Activated CD4-positive, alpha-beta T cell treated with anti-CD3 and anti-CD28 coated beads for 36 hours (primary cell): ENCODE measurements at regions of chr9 and their contacts with region 1.

Region 1: DNA sequence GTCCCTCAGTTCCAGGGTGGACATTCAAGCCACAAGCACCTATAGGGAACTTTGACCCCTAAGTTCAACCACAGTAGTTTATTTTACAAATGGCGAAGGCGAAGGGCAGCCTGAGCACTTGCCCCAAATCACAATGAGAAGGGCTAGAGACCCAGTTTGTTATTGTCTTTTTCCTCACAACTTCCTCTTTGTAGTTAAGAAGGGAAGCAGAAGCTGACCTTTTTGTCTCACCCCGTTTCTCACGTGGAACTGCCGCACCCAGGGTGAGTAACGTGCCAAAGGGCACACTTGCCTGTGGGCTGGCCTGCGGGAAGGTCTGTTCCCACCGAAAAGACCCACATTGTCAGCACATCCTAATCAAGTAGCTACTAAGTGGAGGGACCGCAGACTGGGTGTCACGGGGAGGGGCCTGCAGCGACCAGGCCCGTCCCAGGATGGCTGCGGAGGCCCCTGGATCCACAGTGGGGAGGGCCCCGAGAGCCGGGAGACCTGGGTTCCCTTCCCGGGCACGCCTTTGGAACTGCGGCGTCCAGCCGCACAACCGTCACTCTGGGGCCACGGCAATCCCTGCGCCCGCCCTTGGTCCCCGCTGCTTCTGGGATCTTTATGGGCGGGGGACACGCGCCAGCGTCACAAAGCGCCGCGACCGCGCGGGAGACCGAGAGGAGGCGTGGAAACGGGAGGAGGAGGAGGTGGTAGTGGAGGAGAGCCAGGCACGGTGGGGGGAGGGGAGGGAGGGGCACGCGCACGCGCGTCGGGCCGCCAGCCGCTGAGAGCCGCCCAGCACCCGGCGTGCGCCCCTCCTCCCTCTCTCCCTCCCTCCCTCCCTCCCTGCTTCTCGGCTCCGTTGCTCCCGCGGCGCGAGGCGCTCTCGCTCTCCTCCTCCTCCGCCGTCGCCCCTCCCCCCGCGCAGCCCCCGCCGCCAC is at the start of gene UBE2R2:
- DNase-seq: peak; percentile 97
- ATAC-seq: peak; percentile 81
- H3K4me3 Mint-ChIP-seq: peak within 1 kb of the TSS; percentile 89
- H3K27ac Mint-ChIP-seq: peak within 1 kb of the TSS; percentile 92
- H3K4me1 Mint-ChIP-seq: peaks cover 56% of the 10 kb centered on the region
- H3K27me3 Mint-ChIP-seq: no peaks in the 10 kb centered on the region
- total RNA-seq, gene UBE2R2: 47.7 to 49.5 TPM

Region 2: DNA sequence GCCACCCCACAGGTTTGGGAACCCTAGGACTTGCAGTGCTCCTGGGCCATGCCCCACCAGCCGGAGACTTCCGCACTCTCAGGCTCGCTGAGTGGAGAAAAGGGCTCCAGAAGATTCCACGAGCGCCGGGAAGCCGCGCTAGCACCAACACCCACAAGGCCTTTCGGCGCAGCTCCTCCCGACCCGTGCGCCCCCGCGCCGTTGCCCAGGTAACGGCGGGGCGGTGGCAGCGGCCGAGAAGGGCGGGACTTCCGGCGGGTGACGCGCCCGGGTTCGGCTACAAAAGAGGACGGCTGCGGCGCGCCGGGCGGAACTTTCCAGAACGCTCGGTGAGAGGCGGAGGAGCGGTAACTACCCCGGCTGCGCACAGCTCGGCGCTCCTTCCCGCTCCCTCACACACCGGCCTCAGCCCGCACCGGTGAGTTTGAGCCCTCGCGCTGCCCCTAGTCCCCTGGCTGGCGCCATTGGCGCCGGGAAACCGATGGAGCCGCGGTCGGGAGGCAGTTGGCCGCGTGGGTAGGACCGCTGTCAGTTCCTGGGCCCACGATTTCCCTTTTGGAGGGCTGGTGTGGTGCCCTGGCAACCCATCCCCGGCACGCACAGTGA is 791.5 kb before region 1 on chr9 and contains the start of gene DNAJA1:
- CTCF ChIA-PET with region 1: no interaction called
- POLR2A ChIA-PET with region 1: interaction called, 3 read pairs
- intact Hi-C with region 1: loop called in 1 of 2 experiments (anchors 5 kb)
- DNase-seq: peak; percentile 97
- ATAC-seq: peak; percentile 82
- H3K4me3 Mint-ChIP-seq: peak within 1 kb of the TSS; percentile 98
- H3K27ac Mint-ChIP-seq: peak within 1 kb of the TSS; percentile 94
- H3K4me1 Mint-ChIP-seq: peaks cover 59% of the 10 kb centered on the region
- H3K27me3 Mint-ChIP-seq: no peaks in the 10 kb centered on the region
- total RNA-seq, gene DNAJA1: 198 to 266 TPM

Region 3: GRCh38 chr9:33835625-33836260 is 19.2 kb after region 1 on chr9:
- CTCF ChIA-PET with region 1: interaction called, 31 read pairs
- POLR2A ChIA-PET with region 1: interaction called, 10 read pairs
- intact Hi-C with region 1: loop called (anchors 1 to 2 kb)
- DNase-seq: no peak
- ATAC-seq: peak; percentile 8
- H3K4me3 Mint-ChIP-seq: no peak overlapping the region
- H3K27ac Mint-ChIP-seq: peak overlapping the region; percentile 83
- H3K4me1 Mint-ChIP-seq: peaks cover 44% of the 10 kb centered on the region
- H3K27me3 Mint-ChIP-seq: no peaks in the 10 kb centered on the region

Region 4: GRCh38 chr9:33924978-33925797 is 108.6 kb after region 1 on chr9:
- CTCF ChIA-PET with region 1: interaction called, 23 read pairs
- POLR2A ChIA-PET with region 1: interaction called, 3 read pairs
- intact Hi-C with region 1: loop called (anchors 5 kb)
- DNase-seq: peak; percentile 55
- ATAC-seq: peak; percentile 45
- H3K4me3 Mint-ChIP-seq: no peak overlapping the region
- H3K27ac Mint-ChIP-seq: no peak overlapping the region
- H3K4me1 Mint-ChIP-seq: no peaks in the 10 kb centered on the region
- H3K27me3 Mint-ChIP-seq: no peaks in the 10 kb centered on the region

Region 5: GRCh38 chr9:34126207-34127034 is 309.8 kb after region 1 on chr9 and contains the start of gene DCAF12:
- CTCF ChIA-PET with region 1: no interaction called
- POLR2A ChIA-PET with region 1: no interaction called
- intact Hi-C with region 1: loop called in 1 of 2 experiments (anchors 1 kb)
- DNase-seq: peak; percentile 95
- ATAC-seq: peak; percentile 97
- H3K4me3 Mint-ChIP-seq: peak within 1 kb of the TSS; percentile 95
- H3K27ac Mint-ChIP-seq: peak within 1 kb of the TSS; percentile 98
- H3K4me1 Mint-ChIP-seq: peaks cover 40% of the 10 kb centered on the region
- H3K27me3 Mint-ChIP-seq: no peaks in the 10 kb centered on the region
- total RNA-seq, gene DCAF12: 34.6 to 35.0 TPM

Region 6: GRCh38 chr9:34376596-34377403 is 560.2 kb after region 1 on chr9 and contains the start of gene MYORG:
- CTCF ChIA-PET with region 1: no interaction called
- POLR2A ChIA-PET with region 1: no interaction called
- intact Hi-C with region 1: loop called (anchors 1 to 2 kb)
- DNase-seq: peak; percentile 98
- ATAC-seq: peak; percentile 82
- H3K4me3 Mint-ChIP-seq: peak within 1 kb of the TSS; percentile 76
- H3K27ac Mint-ChIP-seq: peak within 1 kb of the TSS; percentile 62
- H3K4me1 Mint-ChIP-seq: peaks cover 36% of the 10 kb centered on the region
- H3K27me3 Mint-ChIP-seq: no peaks in the 10 kb centered on the region
- total RNA-seq, gene MYORG: 2.2 to 2.3 TPM

Region 7: GRCh38 chr9:34513567-34514214 is 697.1 kb after region 1 on chr9:
- CTCF ChIA-PET with region 1: no interaction called
- POLR2A ChIA-PET with region 1: no interaction called
- intact Hi-C with region 1: no loop called
- DNase-seq: no peak
- ATAC-seq: no peak
- H3K4me3 Mint-ChIP-seq: no peak overlapping the region
- H3K27ac Mint-ChIP-seq: no peak overlapping the region
- H3K4me1 Mint-ChIP-seq: no peaks in the 10 kb centered on the region
- H3K27me3 Mint-ChIP-seq: no peaks in the 10 kb centered on the region